Activated CD4-positive, alpha-beta memory T cell treated with anti-CD3 and anti-CD28 coated beads, Interleukin-2, amount 10 ng/mL, durations not matched to agents 7 days and 5 days (primary cell): ENCODE measurements at regions of chr15 and their contacts with region 1.

Region 1: GRCh38 chr15:99704444-99704838 is 28.8 kb downstream of the LYSMD4 start:
- DNase-seq: no peak
- H3K4me3 Mint-ChIP-seq: no peak overlapping the region
- H3K27ac Mint-ChIP-seq: no peak overlapping the region
- H3K4me1 Mint-ChIP-seq: peaks cover 40% of the 10 kb centered on the region
- H3K27me3 Mint-ChIP-seq: no peaks in the 10 kb centered on the region

Region 2: DNA sequence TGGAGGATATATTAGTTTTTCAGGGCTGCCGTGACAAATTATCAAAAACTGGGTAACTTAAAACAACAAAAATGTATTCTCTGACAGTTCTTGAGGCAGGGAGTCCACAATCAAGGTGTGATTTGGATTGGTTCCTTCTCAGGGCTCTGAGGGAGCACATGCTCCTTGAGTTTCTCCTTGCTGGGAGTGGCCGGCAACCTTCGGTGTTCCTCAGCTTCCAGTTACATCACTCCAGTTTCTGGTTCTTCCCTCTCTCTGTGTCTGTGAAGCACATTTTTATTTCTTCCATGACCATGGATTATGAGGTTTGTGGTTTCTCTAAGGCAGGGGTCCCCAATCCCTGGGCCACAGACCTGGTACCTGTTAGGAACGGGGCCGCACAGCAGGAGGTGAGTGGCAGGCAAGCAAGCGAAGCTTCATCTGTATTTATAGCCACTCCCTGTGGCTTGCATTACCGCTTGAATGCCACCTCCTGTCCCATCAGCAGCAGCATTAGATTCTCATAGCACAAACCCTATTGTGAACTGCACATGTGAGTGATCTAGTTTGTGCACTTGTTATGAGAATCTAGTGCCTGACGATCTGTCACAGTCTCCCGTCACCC is 428.8 kb before region 1 on chr15:
- CTCF ChIA-PET with region 1: interaction called, 106 read pairs
- POLR2A ChIA-PET with region 1: interaction called, 4 read pairs
- DNase-seq: no peak
- H3K4me3 Mint-ChIP-seq: no peak overlapping the region
- H3K27ac Mint-ChIP-seq: no peak overlapping the region
- H3K4me1 Mint-ChIP-seq: peaks cover 22% of the 10 kb centered on the region
- H3K27me3 Mint-ChIP-seq: no peaks in the 10 kb centered on the region

Region 3: GRCh38 chr15:99409097-99409473 is 295.4 kb before region 1 on chr15:
- CTCF ChIA-PET with region 1: interaction called, 21 read pairs
- POLR2A ChIA-PET with region 1: no interaction called
- DNase-seq: no peak
- H3K4me3 Mint-ChIP-seq: no peak overlapping the region
- H3K27ac Mint-ChIP-seq: no peak overlapping the region
- H3K4me1 Mint-ChIP-seq: peaks cover 15% of the 10 kb centered on the region
- H3K27me3 Mint-ChIP-seq: no peaks in the 10 kb centered on the region

Region 4: GRCh38 chr15:99692825-99693224 is 11.6 kb before region 1 on chr15:
- CTCF ChIA-PET with region 1: interaction called, 13 read pairs
- POLR2A ChIA-PET with region 1: interaction called, 3 read pairs
- DNase-seq: no peak
- H3K4me3 Mint-ChIP-seq: no peak overlapping the region
- H3K27ac Mint-ChIP-seq: no peak overlapping the region
- H3K4me1 Mint-ChIP-seq: no peaks in the 10 kb centered on the region
- H3K27me3 Mint-ChIP-seq: no peaks in the 10 kb centered on the region

Region 5: GRCh38 chr15:99733268-99734039 is 29.0 kb after region 1 on chr15 and contains the start of gene LYSMD4:
- CTCF ChIA-PET with region 1: interaction called, 28 read pairs
- POLR2A ChIA-PET with region 1: interaction called, 24 read pairs
- DNase-seq: peak; percentile 99
- H3K4me3 Mint-ChIP-seq: peak within 1 kb of the TSS; percentile 73
- H3K27ac Mint-ChIP-seq: peak within 1 kb of the TSS; percentile 85
- H3K4me1 Mint-ChIP-seq: peaks cover 22% of the 10 kb centered on the region
- H3K27me3 Mint-ChIP-seq: no peaks in the 10 kb centered on the region
- total RNA-seq, gene LYSMD4: 10.7 to 10.9 TPM

Region 6: GRCh38 chr15:99921101-99921500 is 216.7 kb after region 1 on chr15:
- CTCF ChIA-PET with region 1: no interaction called
- POLR2A ChIA-PET with region 1: no interaction called
- DNase-seq: no peak
- H3K4me3 Mint-ChIP-seq: no peak overlapping the region
- H3K27ac Mint-ChIP-seq: no peak overlapping the region
- H3K4me1 Mint-ChIP-seq: peaks cover 7% of the 10 kb centered on the region
- H3K27me3 Mint-ChIP-seq: peaks cover 37% of the 10 kb centered on the region

Region 7: DNA sequence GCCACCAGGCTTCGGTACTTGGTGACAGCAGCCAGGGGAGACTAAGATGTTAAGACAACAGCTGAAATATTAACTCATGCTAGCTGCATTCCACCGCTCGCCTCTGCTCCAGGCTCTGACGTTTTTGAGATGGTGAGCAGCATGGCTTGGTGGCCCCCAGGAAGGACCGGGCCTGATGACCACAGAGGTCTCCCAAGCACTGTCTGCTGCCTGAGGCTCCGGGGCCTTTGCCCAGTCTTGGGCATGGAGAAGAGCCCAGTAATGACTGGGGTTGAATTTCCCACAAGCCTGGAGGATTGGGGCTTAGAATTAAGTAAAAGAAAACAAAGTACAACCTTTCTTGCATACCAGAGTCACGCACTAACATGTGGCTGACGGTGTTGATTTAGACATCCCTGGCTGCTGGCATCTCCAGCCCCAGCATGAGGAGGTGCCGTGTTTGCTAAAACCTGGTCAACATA is 272.4 kb after region 1 on chr15:
- CTCF ChIA-PET with region 1: no interaction called
- POLR2A ChIA-PET with region 1: no interaction called
- DNase-seq: no peak
- H3K4me3 Mint-ChIP-seq: no peak overlapping the region
- H3K27ac Mint-ChIP-seq: no peak overlapping the region
- H3K4me1 Mint-ChIP-seq: no peaks in the 10 kb centered on the region
- H3K27me3 Mint-ChIP-seq: no peaks in the 10 kb centered on the region